Dendritic cell treated with granulocyte-macrophage colony-stimulating factor and Interleukin-4, amounts not matched to agents 40 ng/mL and 50 ng/mL, for 4 days (primary cell): ENCODE measurements at regions of chr10 and their contacts with region 1.

Region 1: DNA sequence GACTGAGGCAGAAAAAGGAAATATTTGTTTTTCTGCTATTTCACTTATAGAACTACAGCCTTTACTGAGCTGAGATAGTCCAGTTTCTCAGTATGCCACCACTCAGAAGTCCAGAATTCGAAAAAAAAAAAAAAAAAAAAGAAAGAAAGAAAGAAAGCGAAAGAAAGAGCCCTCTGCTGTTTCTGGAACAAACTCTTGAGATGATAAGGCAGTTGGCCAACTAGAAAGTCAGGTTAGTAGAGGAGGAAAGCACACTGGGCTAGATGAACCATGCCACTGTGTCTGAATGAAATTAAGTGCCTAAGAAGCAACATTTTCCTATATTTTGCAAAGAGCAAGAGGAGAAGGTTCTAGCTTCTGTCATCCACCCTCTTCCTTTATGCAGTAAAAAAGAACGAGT is 403.8 kb downstream of the SORCS3 start:
- H3K4me3 Mint-ChIP-seq: no peak overlapping the region
- H3K27ac Mint-ChIP-seq: no peak overlapping the region
- H3K4me1 Mint-ChIP-seq: no peaks in the 10 kb centered on the region
- H3K27me3 Mint-ChIP-seq: no peaks in the 10 kb centered on the region

Region 2: DNA sequence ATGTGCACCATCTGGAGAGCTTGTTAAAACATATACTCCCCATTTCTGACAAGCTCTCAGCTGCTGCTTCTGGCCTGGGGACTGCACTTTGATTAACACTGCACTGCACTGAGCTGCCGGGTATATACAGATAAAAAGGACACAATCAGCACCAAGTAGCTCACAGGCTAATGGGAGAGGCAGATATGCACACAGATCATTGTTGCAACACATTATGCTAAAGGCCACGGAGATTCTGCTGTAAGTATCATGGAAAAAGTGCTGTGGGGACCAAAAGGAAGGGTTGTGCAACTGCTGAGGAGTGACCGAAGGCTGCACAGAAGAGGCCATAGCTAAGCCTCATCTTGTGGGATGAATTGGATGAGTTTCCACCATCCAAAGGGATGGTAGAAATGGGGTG is 51.4 kb after region 1 on chr10:
- intact Hi-C with region 1: loop called (anchors 1 kb)
- H3K4me3 Mint-ChIP-seq: no peak overlapping the region
- H3K27ac Mint-ChIP-seq: no peak overlapping the region
- H3K4me1 Mint-ChIP-seq: no peaks in the 10 kb centered on the region
- H3K27me3 Mint-ChIP-seq: no peaks in the 10 kb centered on the region